HEK293 (cell line): ENCODE measurements at regions of chr17 and their contacts with region 1.

Region 1: GRCh38 chr17:9522074-9522473 is 53.5 kb downstream of the STX8 start:
- H3K4me3 ChIP-seq: no peak overlapping the region
- H3K27ac ChIP-seq: no peak overlapping the region
- H3K4me1 ChIP-seq: peaks cover 10% of the 10 kb centered on the region
- CTCF ChIP-seq: peak; percentile 42; the same call in 1 of the 2 replicates

Region 2: DNA sequence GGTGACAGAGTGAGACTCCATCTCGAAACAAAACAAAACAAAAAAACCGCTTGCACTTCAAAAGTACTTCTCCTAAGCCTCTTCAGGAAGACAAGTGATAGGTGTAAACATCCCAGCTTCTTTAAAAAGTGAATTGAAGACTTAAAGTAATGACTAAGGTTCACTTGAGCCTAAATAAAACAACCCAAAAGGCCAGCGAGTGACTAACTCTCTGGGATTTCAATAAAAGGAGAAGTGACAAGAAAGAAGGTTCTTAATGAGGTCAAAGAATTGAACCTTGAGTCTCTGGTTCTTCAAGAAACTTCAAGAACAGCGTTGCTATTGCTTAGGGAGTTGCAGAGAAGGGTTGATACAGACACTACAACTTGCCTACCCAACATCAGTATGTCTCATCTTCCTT is 11.4 kb after region 1 on chr17:
- CTCF ChIA-PET with region 1: interaction called, 16 read pairs
- POLR2A ChIA-PET with region 1: no interaction called
- H3K4me3 ChIP-seq: no peak overlapping the region
- H3K27ac ChIP-seq: no peak overlapping the region
- H3K4me1 ChIP-seq: peaks cover 10% of the 10 kb centered on the region
- CTCF ChIP-seq: no peak

Region 3: DNA sequence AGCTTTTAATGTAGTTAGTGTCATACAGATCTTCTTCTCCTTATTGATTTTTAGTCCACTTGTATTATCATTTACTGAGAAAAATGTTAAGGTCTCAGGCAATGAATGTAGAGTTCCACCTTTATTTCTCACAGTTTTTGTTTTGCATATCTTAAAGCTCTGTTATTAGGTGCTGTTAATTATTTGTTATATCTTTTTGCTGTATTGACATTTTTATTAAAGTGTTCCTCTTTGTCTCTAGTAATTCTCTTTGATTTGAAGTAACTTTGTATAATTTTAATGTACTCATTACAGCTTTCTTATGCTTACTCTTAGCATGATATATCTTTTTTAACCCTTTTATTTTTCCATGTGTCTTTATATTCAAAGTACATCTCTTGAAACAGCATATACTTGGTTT is 100.9 kb after region 1 on chr17:
- CTCF ChIA-PET with region 1: no interaction called
- POLR2A ChIA-PET with region 1: no interaction called
- H3K4me3 ChIP-seq: no peak overlapping the region
- H3K27ac ChIP-seq: no peak overlapping the region
- H3K4me1 ChIP-seq: no peaks in the 10 kb centered on the region
- CTCF ChIP-seq: no peak